Cardiac septum (tissue), 1 donor: ENCODE measurements at regions of chr19 and their contacts with region 1.

Region 1: DNA sequence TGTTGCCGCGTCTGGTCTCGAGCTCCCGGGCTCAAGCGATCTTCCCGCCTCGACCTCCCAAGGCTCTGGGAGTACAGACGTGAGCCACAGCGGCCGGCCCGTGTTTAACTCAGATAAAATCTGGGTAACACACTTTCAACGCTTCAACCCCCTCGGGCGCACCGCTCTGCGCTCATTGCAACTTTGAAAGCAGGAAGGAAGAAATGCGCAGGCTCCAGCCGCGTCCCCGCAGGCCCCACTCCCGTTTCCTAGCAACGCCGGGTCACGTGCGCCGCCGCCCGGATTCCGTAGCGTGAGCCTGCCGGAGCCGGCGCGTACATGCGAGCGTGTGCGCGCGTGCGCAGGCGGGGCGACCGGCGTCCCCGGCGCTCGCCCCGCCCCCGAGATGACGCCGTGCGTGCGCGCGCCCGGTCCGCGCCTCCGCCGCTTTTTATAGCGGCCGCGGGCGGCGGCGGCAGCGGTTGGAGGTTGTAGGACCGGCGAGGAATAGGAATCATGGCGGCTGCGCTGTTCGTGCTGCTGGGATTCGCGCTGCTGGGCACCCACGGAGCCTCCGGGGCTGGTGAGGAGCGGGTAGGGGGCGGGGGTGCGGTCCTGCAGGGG is at the start of gene BSG:
- DNase-seq: peak; percentile 99
- total RNA-seq, gene BSG: 1,183 TPM

Region 2: DNA sequence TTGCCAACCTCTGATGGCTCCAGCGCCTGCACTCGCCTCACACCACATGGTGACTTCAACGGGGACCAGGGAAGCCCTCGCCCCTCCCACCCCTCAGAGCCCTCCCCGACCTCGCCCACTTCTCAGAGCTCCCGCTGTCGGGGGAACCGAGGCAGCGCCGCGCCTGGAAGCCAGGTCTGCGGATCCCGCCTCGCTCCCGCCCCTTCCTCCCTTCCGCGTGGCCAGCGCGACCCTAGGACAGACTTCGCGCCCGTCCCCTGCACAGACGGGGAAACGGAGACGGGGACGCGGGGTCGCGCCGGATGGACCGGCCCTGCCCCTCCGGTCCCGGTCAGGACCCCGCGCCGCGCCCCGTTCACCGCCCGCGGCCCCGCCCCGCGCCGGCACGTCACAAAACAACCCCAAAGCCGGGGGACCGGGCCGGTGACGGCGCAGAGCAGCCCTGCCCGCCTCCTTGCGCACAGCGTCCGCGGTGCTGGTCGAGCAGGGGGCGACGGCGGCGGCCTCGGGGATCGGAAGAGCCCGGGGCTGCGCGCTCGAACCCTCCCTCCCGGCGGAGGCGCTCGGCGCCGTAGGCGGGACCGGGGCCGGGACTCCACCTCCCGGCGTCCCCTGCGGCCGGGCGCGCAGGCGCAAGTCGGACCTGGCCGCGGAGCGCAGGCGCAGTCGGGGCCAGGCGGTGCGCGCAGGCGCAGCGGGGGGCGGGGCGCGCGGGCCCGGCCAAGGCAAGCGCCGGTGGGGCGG is 41.1 kb before region 1 on chr19:
- intact Hi-C with region 1: loop called (anchors 5 kb)
- DNase-seq: peak; percentile 91

Region 3: GRCh38 chr19:662962-663681 is 90.9 kb after region 1 on chr19 and contains the start of gene RNF126:
- intact Hi-C with region 1: loop called (anchors 5 kb)
- DNase-seq: peak; percentile 97
- total RNA-seq, gene RNF126: 31.4 TPM